T-cell (primary cell): ENCODE measurements at regions of chr11 and their contacts with region 1.

Region 1: DNA sequence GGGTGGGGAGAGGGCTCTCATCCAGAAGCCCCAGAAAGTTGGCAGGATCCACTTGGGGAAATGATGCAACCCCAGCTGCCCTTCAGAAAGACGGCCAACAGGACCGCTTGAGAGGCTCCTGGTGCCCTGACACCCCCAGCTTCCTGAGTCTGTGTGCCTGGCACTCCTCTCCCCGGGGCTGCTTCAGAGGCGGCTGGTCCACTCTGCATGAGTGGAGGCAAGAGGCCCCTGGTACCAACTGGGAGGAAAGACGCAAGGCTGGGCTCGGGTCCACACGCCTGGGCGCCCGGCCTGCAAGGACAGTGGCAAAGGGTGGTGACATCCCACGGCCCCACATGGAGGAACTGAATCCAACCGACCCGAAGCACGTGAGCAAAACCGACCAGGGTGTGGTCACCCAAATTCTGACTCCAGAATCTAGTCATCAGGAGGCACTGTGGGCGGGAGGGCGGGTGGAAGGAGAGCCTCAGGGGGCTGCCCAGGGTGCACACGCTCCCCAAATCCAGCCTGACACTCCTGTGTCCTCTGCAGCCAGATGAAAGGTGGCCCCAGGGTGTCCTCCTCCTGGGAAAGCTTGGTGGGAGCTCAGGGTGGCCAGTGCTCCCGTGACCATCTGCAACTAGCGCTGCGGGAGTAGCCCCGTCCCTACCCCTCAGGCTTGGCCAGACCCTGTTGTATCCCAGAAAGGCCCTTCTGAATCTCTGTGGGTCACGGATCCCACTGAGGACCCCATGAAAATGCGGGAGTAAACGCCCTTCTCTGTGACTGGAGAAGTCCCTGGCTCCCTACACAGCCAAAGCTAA is 3.7 kb downstream of the RNH1 start:
- DNase-seq: peak in 1 of 35 experiments; percentile 35
- ATAC-seq: no peak
- H3K4me3 ChIP-seq: no peak overlapping the region
- H3K4me3 Mint-ChIP-seq: peak overlapping the region; percentile 25 to 34 (median 25)
- H3K27ac ChIP-seq: no peak overlapping the region
- H3K27ac Mint-ChIP-seq: peak overlapping the region in 1 of 2 donors; percentile 69
- H3K4me1 ChIP-seq: peaks cover 13 to 46% of the 10 kb centered on the region in 2 experiments
- H3K4me1 Mint-ChIP-seq: peaks cover 11 to 41% (median 31%) of the 10 kb centered on the region in 3 donors
- H3K27me3 ChIP-seq: no peaks in the 10 kb centered on the region
- H3K27me3 Mint-ChIP-seq: no peaks in the 10 kb centered on the region

Region 2: GRCh38 chr11:363948-364761 is 139.2 kb before region 1 on chr11:
- CTCF ChIA-PET with region 1: interaction called in 1 of 2 experiments, 3 read pairs
- POLR2A ChIA-PET with region 1: interaction called in 1 of 2 experiments, 10 read pairs
- DNase-seq: peak; percentile 45 to 77 (median 64)
- ATAC-seq: peak; percentile 72 to 77 (median 74)
- H3K4me3 ChIP-seq: no peak overlapping the region
- H3K4me3 Mint-ChIP-seq: no peak overlapping the region
- H3K27ac ChIP-seq: no peak overlapping the region
- H3K27ac Mint-ChIP-seq: no peak overlapping the region
- H3K4me1 ChIP-seq: peaks cover 0 to 50% of the 10 kb centered on the region in 2 experiments
- H3K4me1 Mint-ChIP-seq: peaks cover 11 to 25% (median 22%) of the 10 kb centered on the region in 3 donors
- H3K27me3 ChIP-seq: peaks cover 0 to 45% of the 10 kb centered on the region in 2 experiments
- H3K27me3 Mint-ChIP-seq: peaks cover 22 to 35% of the 10 kb centered on the region in 2 donors

Region 3: DNA sequence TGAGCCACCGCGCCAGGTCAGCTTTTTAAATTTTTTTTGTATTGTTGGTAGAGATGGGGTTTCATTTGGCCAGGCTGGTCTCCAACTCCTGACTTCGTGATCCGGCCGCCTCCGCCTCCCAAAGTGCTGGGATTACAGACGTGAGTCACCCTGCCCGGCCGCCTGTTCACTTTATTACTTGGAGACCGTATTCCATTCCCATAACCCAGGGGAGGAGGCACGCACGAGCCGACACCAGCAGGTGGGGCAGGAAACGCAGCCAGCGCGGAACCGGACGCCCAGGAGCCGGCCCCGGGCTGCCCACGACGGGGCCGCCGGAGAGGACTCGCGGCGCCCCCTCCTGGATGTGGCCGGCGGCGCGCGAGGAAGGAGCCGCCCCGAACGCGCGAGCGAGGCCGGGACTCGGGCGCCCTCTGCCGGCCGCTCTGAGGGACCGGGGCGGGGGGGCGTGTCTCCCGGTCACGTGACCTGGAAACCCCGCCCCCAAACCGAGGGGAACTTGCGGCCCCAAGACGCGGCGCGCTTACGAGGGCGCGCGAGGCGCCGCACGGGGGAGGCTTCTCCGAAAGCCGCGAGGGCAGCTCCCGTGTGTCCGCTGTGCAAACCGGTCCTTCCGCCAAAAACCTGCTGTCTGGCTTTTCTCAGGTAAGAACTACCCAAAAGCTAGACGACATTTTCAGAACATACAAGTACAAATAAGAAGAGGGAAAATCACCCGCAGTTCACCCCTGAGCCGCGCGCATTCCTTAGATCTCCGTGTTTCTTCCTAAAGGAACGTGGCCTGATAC is 15.3 kb after region 1 on chr11:
- CTCF ChIA-PET with region 1: interaction called in 1 of 2 experiments, 10 read pairs
- POLR2A ChIA-PET with region 1: interaction called in 1 of 2 experiments, 3 read pairs
- DNase-seq: peak; percentile 64 to 97 (median 85)
- ATAC-seq: peak; percentile 84 to 98 (median 94)
- H3K4me3 ChIP-seq: peak overlapping the region; percentile 23 to 28
- H3K4me3 Mint-ChIP-seq: peak overlapping the region; percentile 71 to 83 (median 76)
- H3K27ac ChIP-seq: peak overlapping the region; percentile 44
- H3K27ac Mint-ChIP-seq: peak overlapping the region; percentile 84 to 89
- H3K4me1 ChIP-seq: peaks cover 2 to 7% of the 10 kb centered on the region in 2 experiments
- H3K4me1 Mint-ChIP-seq: peaks cover 4 to 7% (median 5%) of the 10 kb centered on the region in 3 donors
- H3K27me3 ChIP-seq: no peaks in the 10 kb centered on the region
- H3K27me3 Mint-ChIP-seq: no peaks in the 10 kb centered on the region